ENCODE measurements at regions of chr10 and their contacts with region 1.

Region 1: DNA sequence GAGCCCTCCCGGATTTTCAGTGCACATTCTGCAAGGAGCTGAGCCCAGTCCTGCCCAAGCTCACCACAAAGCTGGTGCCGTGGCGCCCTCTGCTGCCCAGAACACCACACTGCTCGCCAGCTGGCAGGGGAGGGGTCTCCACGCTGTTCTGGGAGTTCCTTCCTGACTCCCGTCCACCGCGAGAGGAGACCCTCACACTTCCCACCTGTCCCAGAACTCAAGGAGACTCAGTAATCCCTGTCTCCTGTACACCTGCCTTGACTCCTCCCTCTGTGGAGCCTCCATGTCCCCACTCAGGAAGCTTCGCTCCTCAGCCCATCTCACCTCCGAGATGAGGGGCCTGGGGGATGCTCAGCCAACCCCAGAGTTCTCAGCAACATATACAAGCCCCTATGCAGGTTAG is 11.3 kb downstream of the C10orf105 start:
- DNase-seq: peak; percentile 90
- H3K4me3 ChIP-seq: peak overlapping the region in 1 of 2 experiments; percentile 51; a peak in 1 of 4 replicates
- H3K27ac ChIP-seq: no peak overlapping the region
- H3K4me1 ChIP-seq: peaks cover 0 to 13% of the 10 kb centered on the region in 2 experiments; a peak in 1 of 4 replicates
- H3K27me3 ChIP-seq: peaks cover 3% of the 10 kb centered on the region; the same call in 1 of the 2 replicates
- CTCF ChIP-seq: peak; percentile 77
- EP300 ChIP-seq: no peak
- RAD21 ChIP-seq: peak; percentile 90

Region 2: GRCh38 chr10:71383972-71384687 is 324.2 kb before region 1 on chr10:
- CTCF ChIA-PET with region 1: interaction called, 31 read pairs
- POLR2A ChIA-PET with region 1: no interaction called
- DNase-seq: peak; percentile 84
- H3K4me3 ChIP-seq: no peak overlapping the region; a peak in 1 of 4 replicates
- H3K27ac ChIP-seq: no peak overlapping the region
- H3K4me1 ChIP-seq: no peaks in the 10 kb centered on the region
- H3K27me3 ChIP-seq: peaks cover 30% of the 10 kb centered on the region; the same call in 1 of the 2 replicates
- CTCF ChIP-seq: peak; percentile 89
- EP300 ChIP-seq: no peak
- RAD21 ChIP-seq: peak; percentile 80

Region 3: DNA sequence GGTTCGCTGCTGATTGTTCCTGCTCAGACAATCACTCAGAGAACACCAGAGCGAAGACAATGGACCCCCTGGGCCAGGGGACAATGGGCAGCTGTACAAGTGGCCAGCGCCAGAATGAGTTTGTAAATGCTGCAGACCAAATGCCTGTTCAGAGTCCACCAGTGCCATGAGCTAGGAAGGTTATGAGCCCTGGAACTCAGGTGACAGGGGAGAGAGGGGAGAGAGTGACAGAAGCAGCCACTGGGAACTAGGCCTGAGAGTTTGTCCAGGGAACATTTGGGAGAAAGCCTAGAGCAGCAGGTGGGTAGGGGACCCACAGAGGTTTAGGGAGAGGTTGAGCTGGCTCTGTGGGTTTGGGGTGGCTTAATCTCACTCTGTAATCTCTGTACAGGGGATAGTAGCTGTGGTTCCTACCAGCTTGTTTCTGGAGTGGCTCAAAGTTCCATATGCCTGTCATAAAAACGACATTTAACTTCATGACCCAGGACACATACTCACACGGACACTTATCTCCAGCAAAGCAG is 49.1 kb before region 1 on chr10:
- CTCF ChIA-PET with region 1: interaction called, 20 read pairs
- POLR2A ChIA-PET with region 1: no interaction called
- DNase-seq: peak; percentile 61
- H3K4me3 ChIP-seq: no peak overlapping the region
- H3K27ac ChIP-seq: peak overlapping the region in 1 of 2 experiments; percentile 22; a peak in 1 of 4 replicates
- H3K4me1 ChIP-seq: peaks cover 0 to 18% of the 10 kb centered on the region in 2 experiments; a peak in 1 of 4 replicates
- H3K27me3 ChIP-seq: peaks cover 12% of the 10 kb centered on the region; the same call in 1 of the 2 replicates
- CTCF ChIP-seq: no peak
- EP300 ChIP-seq: peak in 1 of 2 experiments; percentile 64; a peak in 1 of 4 replicates
- RAD21 ChIP-seq: no peak

Region 4: GRCh38 chr10:71696628-71697326 is 11.5 kb before region 1 on chr10:
- CTCF ChIA-PET with region 1: interaction called, 195 read pairs
- POLR2A ChIA-PET with region 1: interaction called, 3 read pairs
- DNase-seq: peak; percentile 88
- H3K4me3 ChIP-seq: no peak overlapping the region; a peak in 1 of 4 replicates
- H3K27ac ChIP-seq: no peak overlapping the region
- H3K4me1 ChIP-seq: peaks cover 0 to 7% of the 10 kb centered on the region in 2 experiments; a peak in 1 of 4 replicates
- H3K27me3 ChIP-seq: peaks cover 28% of the 10 kb centered on the region; the same call in 1 of the 2 replicates
- CTCF ChIP-seq: peak; percentile 82
- EP300 ChIP-seq: no peak
- RAD21 ChIP-seq: peak; percentile 64

Region 5: DNA sequence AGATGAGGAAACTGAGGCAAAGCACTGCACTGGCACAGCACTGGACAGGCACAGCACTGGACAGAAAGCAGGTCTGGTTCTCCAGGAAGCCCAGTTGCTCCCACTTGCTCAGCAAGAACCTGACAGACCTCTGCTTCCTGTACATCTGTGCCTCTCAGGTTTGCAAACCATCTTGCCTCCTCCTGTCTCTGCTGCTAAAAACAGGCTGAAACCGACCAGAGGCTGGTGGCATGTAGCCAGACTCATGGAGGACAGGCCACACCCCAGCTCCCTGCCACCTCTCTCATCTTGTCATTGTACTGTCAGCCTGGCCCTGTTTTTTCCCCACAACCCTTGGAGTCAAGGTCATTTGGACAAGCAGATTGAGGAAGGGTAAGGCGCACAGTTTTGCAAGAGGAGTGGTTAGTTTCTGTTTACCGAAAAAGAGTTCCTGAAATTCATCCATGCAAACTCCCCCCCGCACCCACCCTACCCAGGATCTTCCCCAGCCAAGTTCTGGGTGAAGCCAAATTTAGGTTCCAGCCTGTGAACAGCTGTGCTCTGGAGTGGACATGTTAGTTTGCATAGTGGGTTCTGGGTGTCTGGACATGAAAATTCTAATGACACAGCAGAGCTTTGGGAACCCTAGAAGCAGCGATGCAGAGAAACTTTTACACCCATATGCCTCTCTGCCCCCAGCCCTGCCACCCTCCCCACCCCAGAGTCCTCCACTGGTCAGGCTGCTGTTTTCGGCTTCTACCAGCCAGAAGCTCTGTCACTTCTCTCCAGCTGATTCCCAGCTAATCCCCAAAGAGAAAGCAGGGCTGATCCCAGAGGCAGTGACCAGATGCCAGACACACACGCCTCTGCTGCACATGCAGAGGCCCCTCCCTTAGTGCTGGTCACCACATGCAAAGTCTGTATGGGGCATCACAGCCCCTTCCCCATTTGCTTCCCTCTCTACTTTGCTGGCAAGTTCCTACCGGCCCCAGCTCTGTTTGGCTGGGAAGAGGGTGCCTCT is 19.7 kb after region 1 on chr10:
- CTCF ChIA-PET with region 1: interaction called, 20 read pairs
- POLR2A ChIA-PET with region 1: no interaction called
- DNase-seq: peak; percentile 87
- H3K4me3 ChIP-seq: no peak overlapping the region
- H3K27ac ChIP-seq: peak overlapping the region in 1 of 2 experiments; percentile 91; a peak in 2 of 4 replicates
- H3K4me1 ChIP-seq: peaks cover 0 to 46% of the 10 kb centered on the region in 2 experiments; a peak in 1 of 4 replicates
- H3K27me3 ChIP-seq: no peaks in the 10 kb centered on the region; the same call in 1 of the 2 replicates
- CTCF ChIP-seq: no peak
- EP300 ChIP-seq: peak in 1 of 2 experiments; percentile 39; a peak in 1 of 4 replicates
- RAD21 ChIP-seq: no peak

Region 6: GRCh38 chr10:71812016-71812912 is 104.0 kb after region 1 on chr10:
- CTCF ChIA-PET with region 1: interaction called, 16 read pairs
- POLR2A ChIA-PET with region 1: no interaction called
- DNase-seq: peak; percentile 90
- H3K4me3 ChIP-seq: no peak overlapping the region; a peak in 1 of 4 replicates
- H3K27ac ChIP-seq: no peak overlapping the region
- H3K4me1 ChIP-seq: no peaks in the 10 kb centered on the region; a peak in 1 of 4 replicates
- H3K27me3 ChIP-seq: no peaks in the 10 kb centered on the region
- CTCF ChIP-seq: peak; percentile 74
- EP300 ChIP-seq: no peak
- RAD21 ChIP-seq: peak; percentile 78

Region 7: DNA sequence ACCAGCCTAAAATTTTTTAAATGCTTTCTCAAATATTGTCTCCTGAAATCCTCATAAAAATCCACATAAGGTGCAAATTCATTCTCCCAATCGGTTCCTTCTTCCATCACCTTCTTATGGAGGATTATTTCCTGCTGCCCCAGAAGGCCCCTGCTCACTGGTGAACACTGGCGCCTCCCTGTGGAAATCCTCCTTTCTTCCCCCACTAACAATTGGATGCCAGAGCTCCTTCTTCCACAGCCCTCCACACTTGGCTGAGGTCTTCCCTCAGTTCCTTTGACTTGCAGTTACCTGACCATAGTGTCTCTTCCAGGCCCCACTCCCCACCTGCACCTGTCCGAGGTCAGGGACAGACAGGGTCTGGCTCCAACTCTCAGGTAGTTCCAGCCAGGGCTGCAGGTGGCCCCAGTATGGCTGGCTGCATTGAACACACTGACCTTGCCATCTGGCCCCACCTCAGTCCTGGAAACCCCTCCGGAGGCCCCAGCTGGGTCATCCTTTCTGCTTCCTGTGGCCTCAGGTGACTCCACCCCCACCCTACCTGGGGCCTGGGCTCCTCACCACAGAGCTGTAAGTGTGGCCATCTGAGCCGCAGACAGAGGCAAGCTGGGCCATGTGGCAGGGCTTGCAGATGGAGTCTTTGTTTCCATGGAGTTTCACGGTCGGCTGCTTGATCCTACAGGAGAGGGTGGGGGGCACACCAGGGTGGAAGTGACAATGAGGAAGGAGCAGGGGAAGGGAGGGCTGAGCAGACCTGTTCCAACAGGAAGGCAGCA is 361.6 kb after region 1 on chr10:
- CTCF ChIA-PET with region 1: no interaction called
- POLR2A ChIA-PET with region 1: no interaction called
- DNase-seq: no peak
- H3K4me3 ChIP-seq: no peak overlapping the region
- H3K27ac ChIP-seq: no peak overlapping the region
- H3K4me1 ChIP-seq: peaks cover 0 to 47% of the 10 kb centered on the region in 2 experiments; a peak in 1 of 4 replicates
- H3K27me3 ChIP-seq: no peaks in the 10 kb centered on the region
- CTCF ChIP-seq: no peak; the same call in 1 of the 2 replicates
- EP300 ChIP-seq: no peak
- RAD21 ChIP-seq: peak; percentile 16; the same call in 1 of the 2 replicates